ENCODE measurements at regions of chr11 and their contacts with region 1.

Region 1: GRCh38 chr11:35617687-35618496 is at the start of gene FJX1:
- DNase-seq: peak; percentile 82
- H3K4me3 ChIP-seq: peak within 1 kb of the TSS; percentile 43 to 68 (median 64)
- H3K27ac ChIP-seq: peak within 1 kb of the TSS; percentile 65 to 85 (median 80)
- H3K4me1 ChIP-seq: peaks cover 0 to 37% (median 22%) of the 10 kb centered on the region in 4 donors
- H3K27me3 ChIP-seq: peaks cover 8 to 38% (median 19%) of the 10 kb centered on the region in 3 donors
- CTCF ChIP-seq: no peak
- EP300 ChIP-seq: no peak
- POLR2A ChIP-seq: no peak
- total RNA-seq, gene FJX1: 1.9 to 9.4 (median 3.3) TPM

Region 2: DNA sequence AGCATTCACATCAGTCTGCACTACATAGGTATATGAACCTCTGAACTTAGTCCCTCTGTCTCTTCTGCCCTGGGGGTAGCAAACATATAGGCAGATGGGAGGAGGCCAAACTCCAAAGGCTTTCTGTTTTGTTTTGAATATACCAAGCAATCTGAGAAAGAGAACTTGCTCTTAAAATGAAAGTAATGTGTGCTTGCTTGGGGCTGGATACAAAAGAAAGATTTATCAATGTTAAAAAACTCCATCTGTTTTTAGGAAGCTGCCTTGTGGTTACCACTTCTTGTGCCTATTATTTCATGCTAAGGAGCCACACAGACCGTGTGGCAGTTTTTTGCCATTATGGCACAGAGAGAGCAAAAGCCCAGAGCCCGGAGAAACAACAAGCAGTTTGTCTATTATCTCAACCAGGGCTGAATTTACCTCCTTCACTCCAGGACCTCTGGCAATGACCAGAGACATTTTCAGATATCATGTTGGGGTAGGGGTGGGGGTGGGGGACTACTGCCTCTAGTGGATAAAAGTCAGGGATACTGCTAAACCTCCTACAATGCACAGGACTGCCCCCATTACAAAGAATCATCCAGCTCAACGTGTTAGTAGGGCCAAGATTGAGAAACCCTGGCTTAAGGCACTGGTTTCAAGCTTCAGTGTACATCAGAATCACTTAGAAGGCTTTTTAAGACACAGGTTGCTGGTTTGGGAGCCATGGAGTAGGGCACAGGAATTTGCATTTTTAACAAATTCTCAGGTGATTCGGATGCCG is 825.9 kb before region 1 on chr11:
- intact Hi-C with region 1: no loop called
- DNase-seq: no peak
- H3K4me3 ChIP-seq: no peak overlapping the region
- H3K27ac ChIP-seq: no peak overlapping the region
- H3K4me1 ChIP-seq: no peaks in the 10 kb centered on the region
- H3K27me3 ChIP-seq: no peaks in the 10 kb centered on the region
- CTCF ChIP-seq: no peak
- EP300 ChIP-seq: no peak
- POLR2A ChIP-seq: no peak

Region 3: DNA sequence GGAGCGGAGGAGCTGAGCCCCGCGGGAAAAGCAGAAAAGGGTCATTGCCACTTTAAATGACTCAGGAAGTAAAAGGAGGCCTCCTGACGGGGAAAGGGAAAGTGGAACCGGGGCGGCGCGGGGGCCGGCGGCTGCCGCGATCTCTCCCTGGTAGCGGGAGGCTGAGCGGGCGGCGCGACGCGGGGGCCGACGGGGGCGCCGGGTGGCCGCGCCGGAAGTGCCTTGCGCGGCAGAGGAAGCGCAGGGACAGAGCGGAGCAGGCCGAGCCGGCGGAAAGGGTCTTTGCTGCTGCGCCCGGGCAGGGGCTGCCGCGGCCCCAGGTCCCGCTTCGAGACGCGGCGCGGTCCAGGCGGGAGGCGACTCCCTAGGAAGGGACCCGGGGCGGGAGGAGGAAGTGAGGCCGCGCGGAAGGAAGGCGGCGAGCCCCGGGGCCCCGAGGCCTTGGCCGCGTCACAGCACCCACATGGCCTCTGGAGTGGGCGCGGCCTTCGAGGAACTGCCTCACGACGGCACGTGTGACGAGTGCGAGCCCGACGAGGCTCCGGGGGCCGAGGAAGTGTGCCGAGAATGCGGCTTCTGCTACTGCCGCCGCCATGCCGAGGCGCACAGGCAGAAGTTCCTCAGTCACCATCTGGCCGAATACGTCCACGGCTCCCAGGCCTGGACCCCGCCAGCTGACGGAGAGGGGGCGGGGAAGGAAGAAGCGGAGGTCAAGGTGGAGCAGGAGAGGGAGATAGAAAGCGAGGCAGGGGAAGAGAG is 44.9 kb after region 1 on chr11 and contains the start of gene TRIM44:
- intact Hi-C with region 1: loop called (anchors 1 kb)
- DNase-seq: peak; percentile 91
- H3K4me3 ChIP-seq: peak within 1 kb of the TSS; percentile 50 to 81 (median 72)
- H3K27ac ChIP-seq: peak within 1 kb of the TSS; percentile 84 to 98 (median 91)
- H3K4me1 ChIP-seq: peaks cover 0 to 27% (median 20%) of the 10 kb centered on the region in 4 donors
- H3K27me3 ChIP-seq: no peaks in the 10 kb centered on the region
- CTCF ChIP-seq: no peak
- EP300 ChIP-seq: no peak
- POLR2A ChIP-seq: no peak
- total RNA-seq, gene TRIM44: 23.0 to 97.2 (median 37.8) TPM

Region 4: DNA sequence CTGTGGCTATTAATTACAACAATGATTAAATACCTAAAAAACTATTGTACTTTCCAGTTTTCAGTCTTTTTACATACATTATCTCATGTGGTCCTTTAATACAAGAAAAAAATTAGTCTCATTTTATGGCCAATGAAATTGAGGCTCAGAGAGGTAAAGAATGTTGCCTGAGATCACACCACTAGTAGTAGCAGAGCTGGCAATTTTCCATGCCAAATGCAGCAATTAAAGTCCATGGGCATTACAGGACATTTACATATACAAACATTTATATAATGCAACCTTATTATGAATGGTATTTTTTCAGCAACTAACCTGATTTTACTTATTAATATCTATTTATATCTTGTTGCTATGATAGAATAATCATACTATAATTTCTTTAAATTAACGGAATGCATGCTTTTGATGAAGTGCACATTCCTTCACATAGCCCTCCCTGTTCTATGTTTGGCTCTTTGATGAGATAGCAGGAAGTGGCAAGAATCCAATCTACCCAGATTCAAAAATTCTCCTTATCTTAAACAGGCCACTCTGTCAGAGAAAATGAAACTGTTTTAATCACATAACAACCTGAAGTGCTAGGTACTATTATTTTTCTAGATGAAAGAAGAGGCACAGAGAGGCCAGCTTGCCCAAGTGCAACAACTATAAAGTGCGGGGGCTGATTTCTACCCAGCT is 205.1 kb after region 1 on chr11:
- intact Hi-C with region 1: loop called (anchors 5 kb)
- DNase-seq: no peak
- H3K4me3 ChIP-seq: no peak overlapping the region
- H3K27ac ChIP-seq: no peak overlapping the region
- H3K4me1 ChIP-seq: peaks cover 0 to 11% (median 6%) of the 10 kb centered on the region in 4 donors
- H3K27me3 ChIP-seq: no peaks in the 10 kb centered on the region
- CTCF ChIP-seq: no peak
- EP300 ChIP-seq: no peak
- POLR2A ChIP-seq: no peak

Region 5: GRCh38 chr11:36131721-36132397 is 514.0 kb after region 1 on chr11:
- intact Hi-C with region 1: loop called (anchors 2 kb)
- DNase-seq: peak; percentile 82
- H3K4me3 ChIP-seq: no peak overlapping the region
- H3K27ac ChIP-seq: no peak overlapping the region
- H3K4me1 ChIP-seq: no peaks in the 10 kb centered on the region
- H3K27me3 ChIP-seq: no peaks in the 10 kb centered on the region
- CTCF ChIP-seq: peak; percentile 24 to 56 (median 40)
- EP300 ChIP-seq: no peak
- POLR2A ChIP-seq: no peak

Region 6: GRCh38 chr11:36265793-36266628 is 648.1 kb after region 1 on chr11:
- intact Hi-C with region 1: loop called (anchors 2 kb)
- DNase-seq: peak; percentile 68
- H3K4me3 ChIP-seq: no peak overlapping the region
- H3K27ac ChIP-seq: no peak overlapping the region
- H3K4me1 ChIP-seq: no peaks in the 10 kb centered on the region
- H3K27me3 ChIP-seq: no peaks in the 10 kb centered on the region
- CTCF ChIP-seq: peak in 3 of 4 experiments; percentile 62 to 79 (median 73)
- EP300 ChIP-seq: no peak
- POLR2A ChIP-seq: no peak

Region 7: GRCh38 chr11:36492724-36493304 is 874.9 kb after region 1 on chr11:
- intact Hi-C with region 1: loop called (anchors 5 kb)
- DNase-seq: no peak
- H3K4me3 ChIP-seq: no peak overlapping the region
- H3K27ac ChIP-seq: no peak overlapping the region
- H3K4me1 ChIP-seq: no peaks in the 10 kb centered on the region
- H3K27me3 ChIP-seq: no peaks in the 10 kb centered on the region
- CTCF ChIP-seq: peak in 3 of 4 experiments; percentile 29 to 75 (median 35)
- EP300 ChIP-seq: no peak
- POLR2A ChIP-seq: no peak